ENCODE measurements at regions of chr4 and their contacts with region 1.

Region 1: GRCh38 chr4:24584175-24584850 is at the start of gene DHX15:
- DNase-seq: peak; percentile 87 to 99 (median 92)

Region 2: DNA sequence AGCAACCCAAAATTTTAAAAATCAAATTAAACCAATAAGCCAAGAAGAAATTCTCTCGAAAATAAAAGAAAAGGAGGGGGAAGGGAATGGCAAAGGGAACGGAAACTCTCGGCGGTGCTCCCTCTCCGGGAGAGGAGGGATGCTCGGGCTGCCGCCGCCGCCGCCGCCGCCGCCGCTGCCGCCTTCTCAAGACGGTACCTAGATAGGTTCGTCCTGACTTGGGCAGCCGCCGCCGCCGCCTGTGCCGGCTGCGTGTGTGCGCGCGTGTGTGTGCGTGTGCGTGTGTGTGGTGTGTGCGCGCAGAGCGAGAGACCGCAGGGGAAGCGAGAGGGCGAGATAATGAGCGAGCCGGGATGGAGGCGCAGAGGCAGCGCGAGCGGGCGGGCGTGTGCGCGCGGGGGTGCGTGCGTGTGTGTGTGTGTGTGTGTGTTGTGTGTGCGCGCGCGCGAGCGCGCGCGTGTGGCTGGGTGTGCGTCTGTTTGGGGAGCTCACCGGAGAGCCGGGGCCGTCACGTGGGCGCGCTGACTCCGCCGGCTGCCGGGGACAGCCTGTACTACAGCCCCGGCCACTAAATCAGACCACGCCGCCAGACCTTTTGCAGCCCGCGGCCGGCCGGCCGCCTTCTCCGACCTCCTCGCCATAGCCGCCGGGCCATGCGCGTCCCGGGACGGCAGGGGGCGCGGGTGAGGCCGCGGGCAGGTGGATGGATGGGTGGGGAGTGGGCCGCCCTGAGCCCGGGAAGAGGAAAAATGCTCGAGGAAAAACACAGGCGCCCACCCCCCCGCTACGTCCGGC is 111.6 kb before region 1 on chr4:
- intact Hi-C with region 1: loop called (anchors 5 kb)
- DNase-seq: peak; percentile 58 to 97 (median 80)

Measured in posterior cingulate gyrus (tissue), 11 donors.